Activated CD4-positive, alpha-beta memory T cell treated with anti-CD3 and anti-CD28 coated beads for 36 hours (primary cell): ENCODE measurements at regions of chr2 and their contacts with region 1.

Region 1: GRCh38 chr2:8544786-8545694 is 136.8 kb upstream of the ID2 start:
- DNase-seq: peak; percentile 96
- H3K4me3 Mint-ChIP-seq: peak overlapping the region; percentile 52
- H3K27ac Mint-ChIP-seq: peak overlapping the region; percentile 100
- H3K4me1 Mint-ChIP-seq: peaks cover 72% of the 10 kb centered on the region
- H3K27me3 Mint-ChIP-seq: no peaks in the 10 kb centered on the region

Region 2: DNA sequence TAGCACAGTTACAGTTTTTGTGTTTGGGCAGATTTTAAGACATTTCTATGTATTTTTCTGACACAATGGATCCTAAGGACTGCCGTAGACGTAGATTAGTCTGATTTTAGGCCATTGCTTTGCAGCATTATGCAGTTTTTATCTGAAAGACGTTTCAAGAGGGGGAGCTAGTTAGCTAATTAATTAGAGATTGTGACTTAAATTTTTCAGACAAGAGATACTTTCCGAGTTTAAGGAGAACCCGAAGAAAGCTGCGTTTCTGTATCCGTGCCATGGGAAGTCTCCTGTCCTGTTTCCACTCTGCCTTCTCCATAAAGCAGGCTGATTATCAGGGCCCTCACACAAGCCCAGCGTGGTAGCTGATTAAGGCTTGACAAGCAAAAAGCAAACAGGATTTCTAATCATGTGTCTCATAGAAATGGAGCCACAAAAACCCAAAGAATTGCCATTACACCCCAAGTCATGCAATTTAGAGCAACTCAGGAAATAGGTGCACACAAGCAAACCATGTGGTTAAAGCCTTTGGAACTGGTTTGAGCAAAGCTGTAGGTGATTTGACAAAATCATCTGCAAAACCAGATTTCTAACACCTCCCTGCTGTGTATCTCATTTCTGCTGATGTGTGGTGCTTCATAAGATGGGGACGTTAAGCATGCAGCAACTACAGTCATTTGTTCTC is 819.7 kb before region 1 on chr2:
- CTCF ChIA-PET with region 1: no interaction called
- POLR2A ChIA-PET with region 1: no interaction called
- intact Hi-C with region 1: loop called (anchors 5 kb)
- DNase-seq: peak; percentile 46
- H3K4me3 Mint-ChIP-seq: peak overlapping the region; percentile 68
- H3K27ac Mint-ChIP-seq: peak overlapping the region; percentile 80
- H3K4me1 Mint-ChIP-seq: peaks cover 36% of the 10 kb centered on the region
- H3K27me3 Mint-ChIP-seq: no peaks in the 10 kb centered on the region

Region 3: GRCh38 chr2:7930800-7931635 is 614.0 kb before region 1 on chr2:
- CTCF ChIA-PET with region 1: no interaction called
- POLR2A ChIA-PET with region 1: interaction called, 5 read pairs
- intact Hi-C with region 1: loop called (anchors 2 kb)
- DNase-seq: peak; percentile 62
- H3K4me3 Mint-ChIP-seq: peak overlapping the region; percentile 1
- H3K27ac Mint-ChIP-seq: peak overlapping the region; percentile 88
- H3K4me1 Mint-ChIP-seq: peaks cover 31% of the 10 kb centered on the region
- H3K27me3 Mint-ChIP-seq: peaks cover 3% of the 10 kb centered on the region

Region 4: GRCh38 chr2:8303322-8303832 is 241.7 kb before region 1 on chr2:
- CTCF ChIA-PET with region 1: interaction called, 3 read pairs
- POLR2A ChIA-PET with region 1: interaction called, 4 read pairs
- intact Hi-C with region 1: loop called (anchors 2 kb)
- DNase-seq: peak; percentile 81
- H3K4me3 Mint-ChIP-seq: no peak overlapping the region
- H3K27ac Mint-ChIP-seq: peak overlapping the region; percentile 16
- H3K4me1 Mint-ChIP-seq: peaks cover 62% of the 10 kb centered on the region
- H3K27me3 Mint-ChIP-seq: peaks cover 6% of the 10 kb centered on the region

Region 5: GRCh38 chr2:8477552-8478470 is 67.2 kb before region 1 on chr2:
- CTCF ChIA-PET with region 1: interaction called, 20 read pairs
- POLR2A ChIA-PET with region 1: interaction called, 32 read pairs
- intact Hi-C with region 1: loop called (anchors 1 kb)
- DNase-seq: peak; percentile 51
- H3K4me3 Mint-ChIP-seq: peak overlapping the region; percentile 60
- H3K27ac Mint-ChIP-seq: peak overlapping the region; percentile 90
- H3K4me1 Mint-ChIP-seq: peaks cover 91% of the 10 kb centered on the region
- H3K27me3 Mint-ChIP-seq: no peaks in the 10 kb centered on the region

Region 6: DNA sequence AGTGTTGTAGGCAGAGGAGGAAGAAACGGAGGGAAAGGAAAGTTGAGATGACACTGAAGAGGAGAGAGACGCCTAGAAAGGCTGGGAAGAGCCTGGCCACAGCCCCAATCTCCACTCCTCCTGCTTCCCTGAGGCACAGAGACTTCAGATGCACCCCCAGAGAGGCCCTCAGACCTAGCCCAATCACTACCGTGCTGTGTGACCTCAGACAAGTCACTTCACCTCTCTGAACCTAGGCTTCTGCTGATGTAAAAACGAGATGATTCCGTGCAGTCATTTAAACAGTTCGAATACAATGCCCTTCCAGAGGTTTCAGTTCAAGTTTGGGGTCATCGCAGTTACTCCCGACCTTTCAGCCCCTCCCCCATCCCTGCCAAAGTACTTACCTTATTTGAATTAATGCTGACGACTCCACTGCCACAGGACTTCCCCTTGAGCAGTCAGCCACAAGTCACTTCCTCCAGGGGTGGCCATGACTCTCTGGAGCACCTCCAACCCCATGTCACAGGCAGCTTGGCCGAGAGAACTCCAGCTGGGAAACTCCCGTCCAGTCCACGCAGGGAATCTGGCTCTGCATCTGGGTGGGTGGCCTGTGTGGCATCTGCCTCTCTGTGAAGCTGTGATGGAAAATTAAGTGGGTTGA is 31.6 kb after region 1 on chr2:
- CTCF ChIA-PET with region 1: no interaction called
- POLR2A ChIA-PET with region 1: interaction called, 12 read pairs
- intact Hi-C with region 1: loop called (anchors 2 kb)
- DNase-seq: peak; percentile 69
- H3K4me3 Mint-ChIP-seq: no peak overlapping the region
- H3K27ac Mint-ChIP-seq: no peak overlapping the region
- H3K4me1 Mint-ChIP-seq: peaks cover 33% of the 10 kb centered on the region
- H3K27me3 Mint-ChIP-seq: peaks cover 3% of the 10 kb centered on the region